ENCODE measurements at regions of chr22 and their contacts with region 1.

Region 1: GRCh38 chr22:36775964-36776669 is at the start of gene IFT27:
- DNase-seq: peak; percentile 100
- H3K4me3 ChIP-seq: peak within 1 kb of the TSS; percentile 85 to 98 (median 92)
- H3K27ac ChIP-seq: peak within 1 kb of the TSS; percentile 86 to 91 (median 90)
- H3K4me1 ChIP-seq: peaks cover 0 to 17% (median 14%) of the 10 kb centered on the region in 4 donors
- H3K27me3 ChIP-seq: no peaks in the 10 kb centered on the region
- CTCF ChIP-seq: no peak
- EP300 ChIP-seq: peak in 1 of 4 donors; percentile 13
- POLR2A ChIP-seq: peak; percentile 10 to 43
- total RNA-seq, gene IFT27: 15.9 to 27.7 (median 25.1) TPM

Region 2: DNA sequence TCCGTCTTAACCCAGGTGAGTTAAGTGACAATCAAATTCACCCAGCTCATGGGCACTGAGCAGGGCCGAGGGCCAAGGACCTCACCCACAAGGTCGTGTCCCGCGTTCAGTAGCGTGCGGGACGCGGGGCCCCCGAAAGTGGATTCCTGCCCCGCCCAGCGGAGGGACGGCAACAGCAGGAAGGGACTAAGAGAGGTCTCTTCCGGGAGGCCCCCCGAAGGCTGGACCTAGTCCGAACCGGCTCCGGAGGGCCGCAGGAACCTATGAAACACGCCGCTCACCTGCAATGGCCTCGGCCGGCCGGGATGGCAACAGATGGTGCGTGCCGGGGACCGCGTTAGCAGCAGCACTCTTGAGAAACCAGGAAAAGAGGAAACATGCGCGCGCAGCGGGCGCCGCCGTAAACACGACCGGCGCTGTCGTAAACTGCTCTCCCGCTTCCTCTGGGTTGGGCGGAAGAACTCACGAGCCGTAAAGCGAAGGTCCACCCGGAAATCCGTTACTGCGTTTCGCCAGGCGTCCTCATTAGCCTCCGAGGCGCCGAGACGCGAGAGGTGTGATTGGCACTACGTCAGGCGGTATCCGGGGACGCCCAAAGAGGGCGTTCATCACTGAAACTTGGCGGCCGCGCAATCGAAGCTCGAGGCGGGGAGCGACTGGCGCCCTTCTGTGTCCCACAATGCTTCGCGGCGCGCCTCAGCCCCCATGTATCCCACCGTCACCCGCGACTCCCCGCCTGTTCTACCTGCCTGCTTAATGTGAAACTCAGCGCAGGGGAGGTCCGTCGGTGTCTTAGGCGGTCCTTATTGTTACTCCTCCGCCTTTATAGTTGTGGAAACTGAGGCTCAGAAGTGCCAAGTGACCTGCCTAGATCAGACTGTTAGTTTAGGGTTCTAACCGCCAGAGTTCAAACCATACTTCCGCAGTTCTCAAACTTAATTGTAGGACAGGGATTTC is 247.0 kb before region 1 on chr22 and contains the start of gene EIF3D:
- intact Hi-C with region 1: loop called (anchors 5 kb)
- DNase-seq: peak; percentile 99
- H3K4me3 ChIP-seq: peak within 1 kb of the TSS; percentile 55 to 72 (median 64)
- H3K27ac ChIP-seq: peak within 1 kb of the TSS; percentile 87 to 92 (median 90)
- H3K4me1 ChIP-seq: peaks cover 0 to 19% (median 15%) of the 10 kb centered on the region in 4 donors
- H3K27me3 ChIP-seq: no peaks in the 10 kb centered on the region
- CTCF ChIP-seq: no peak
- EP300 ChIP-seq: peak in 1 of 4 donors; percentile 59
- POLR2A ChIP-seq: peak; percentile 29 to 39
- total RNA-seq, gene EIF3D: 260 to 376 (median 290) TPM

Region 3: GRCh38 chr22:36873680-36874537 is 97.8 kb after region 1 on chr22:
- intact Hi-C with region 1: no loop called
- DNase-seq: no peak
- H3K4me3 ChIP-seq: no peak overlapping the region
- H3K27ac ChIP-seq: peak overlapping the region; percentile 23 to 52 (median 43)
- H3K4me1 ChIP-seq: peaks cover 0 to 13% (median 12%) of the 10 kb centered on the region in 4 donors
- H3K27me3 ChIP-seq: peaks cover 0 to 22% (median 0%) of the 10 kb centered on the region in 3 donors
- CTCF ChIP-seq: peak; percentile 41 to 84 (median 60)
- EP300 ChIP-seq: no peak
- POLR2A ChIP-seq: no peak

Region 4: GRCh38 chr22:37019309-37020125 is 243.4 kb after region 1 on chr22 and contains the starts of genes MPST and TST:
- intact Hi-C with region 1: loop called (anchors 5 kb)
- DNase-seq: peak; percentile 89
- H3K4me3 ChIP-seq: peak within 1 kb of the TSS; percentile 76 to 99 (median 91)
- H3K27ac ChIP-seq: peak within 1 kb of the TSS; percentile 88 to 93 (median 89)
- H3K4me1 ChIP-seq: peaks cover 0 to 58% (median 46%) of the 10 kb centered on the region in 4 donors
- H3K27me3 ChIP-seq: no peaks in the 10 kb centered on the region
- CTCF ChIP-seq: no peak
- EP300 ChIP-seq: no peak
- POLR2A ChIP-seq: peak; percentile 39 to 56
- total RNA-seq, gene MPST: 94.2 to 143 (median 111) TPM
- total RNA-seq, gene TST: 29.1 to 31.4 (median 30.3) TPM

Measured in sigmoid colon (tissue), 7 donors.